ENCODE measurements at regions of chr14 and their contacts with region 1.

Region 1: GRCh38 chr14:49381778-49382177 is 204.4 kb downstream of the RPS29 start:
- DNase-seq: no peak
- H3K4me3 ChIP-seq: no peak overlapping the region
- H3K27ac ChIP-seq: no peak overlapping the region
- H3K4me1 ChIP-seq: no peaks in the 10 kb centered on the region
- H3K27me3 ChIP-seq: no peaks in the 10 kb centered on the region
- CTCF ChIP-seq: no peak

Region 2: DNA sequence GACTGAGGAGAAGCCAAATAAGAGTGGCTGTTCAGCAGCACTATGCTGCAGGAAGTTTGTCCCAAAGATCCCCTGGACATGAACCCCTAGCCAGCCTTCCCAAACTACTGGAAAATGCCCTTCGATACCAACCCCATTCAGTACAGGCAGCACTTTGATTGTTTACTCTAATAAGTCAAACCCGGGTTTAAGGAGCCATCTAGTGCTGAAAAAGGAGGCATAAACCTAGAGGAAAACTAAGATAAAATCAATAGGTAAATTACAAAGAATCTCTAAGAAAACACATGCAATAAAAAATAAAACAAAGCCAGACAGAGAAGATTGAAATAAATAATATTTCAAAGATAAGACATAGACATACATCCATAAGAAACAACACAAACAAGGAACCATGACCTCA is 567.2 kb before region 1 on chr14:
- CTCF ChIA-PET with region 1: no interaction called
- POLR2A ChIA-PET with region 1: no interaction called
- intact Hi-C with region 1: no loop called
- DNase-seq: peak; percentile 21
- H3K4me3 ChIP-seq: no peak overlapping the region
- H3K27ac ChIP-seq: no peak overlapping the region
- H3K4me1 ChIP-seq: no peaks in the 10 kb centered on the region
- H3K27me3 ChIP-seq: no peaks in the 10 kb centered on the region
- CTCF ChIP-seq: peak; percentile 41; the same call in 1 of the 2 replicates

Region 3: DNA sequence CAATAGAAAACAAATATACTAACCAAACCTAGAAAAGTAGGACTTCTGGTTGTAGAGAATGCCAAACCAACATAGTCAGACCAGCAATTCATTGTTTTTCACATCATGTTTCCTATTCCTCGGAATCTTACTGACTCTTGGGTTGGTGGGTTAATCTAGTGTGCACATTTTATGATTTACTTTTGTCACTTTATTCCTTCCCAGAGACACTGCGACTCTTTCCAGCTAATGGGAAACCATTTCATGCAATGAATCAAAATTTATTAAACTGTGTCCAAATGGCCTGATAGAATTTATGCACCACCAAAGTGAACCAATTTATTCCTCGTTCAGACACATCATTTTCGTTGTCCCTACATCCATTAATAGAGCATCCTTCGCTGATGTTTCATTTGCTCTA is 260.5 kb before region 1 on chr14:
- CTCF ChIA-PET with region 1: no interaction called
- POLR2A ChIA-PET with region 1: no interaction called
- intact Hi-C with region 1: no loop called
- DNase-seq: no peak
- H3K4me3 ChIP-seq: no peak overlapping the region
- H3K27ac ChIP-seq: no peak overlapping the region
- H3K4me1 ChIP-seq: no peaks in the 10 kb centered on the region
- H3K27me3 ChIP-seq: no peaks in the 10 kb centered on the region
- CTCF ChIP-seq: no peak

Region 4: GRCh38 chr14:49396801-49397200 is 15.0 kb after region 1 on chr14:
- CTCF ChIA-PET with region 1: no interaction called
- POLR2A ChIA-PET with region 1: no interaction called
- intact Hi-C with region 1: no loop called
- DNase-seq: no peak
- H3K4me3 ChIP-seq: no peak overlapping the region
- H3K27ac ChIP-seq: no peak overlapping the region
- H3K4me1 ChIP-seq: no peaks in the 10 kb centered on the region
- H3K27me3 ChIP-seq: no peaks in the 10 kb centered on the region
- CTCF ChIP-seq: no peak

Region 5: DNA sequence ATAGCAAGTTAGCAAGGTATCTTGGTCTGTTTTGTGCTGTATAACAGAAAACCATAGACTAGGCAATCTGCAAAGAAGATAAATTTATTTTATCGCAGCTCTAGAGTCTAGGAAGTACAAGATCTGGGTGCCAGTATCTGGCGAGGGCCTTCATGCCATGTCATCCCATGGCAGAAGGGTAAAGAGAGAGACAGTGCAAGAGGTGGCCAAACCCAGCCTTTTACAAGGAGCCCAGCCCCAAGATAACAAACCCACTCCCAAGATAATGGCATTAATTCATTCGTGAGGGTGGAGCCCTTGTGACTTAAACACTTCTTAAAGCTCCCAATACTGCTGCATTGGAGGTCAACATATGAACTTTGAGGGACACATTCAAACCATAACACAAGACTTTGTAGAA is 187.5 kb after region 1 on chr14:
- CTCF ChIA-PET with region 1: no interaction called
- POLR2A ChIA-PET with region 1: no interaction called
- intact Hi-C with region 1: no loop called
- DNase-seq: no peak
- H3K4me3 ChIP-seq: no peak overlapping the region
- H3K27ac ChIP-seq: no peak overlapping the region
- H3K4me1 ChIP-seq: no peaks in the 10 kb centered on the region
- H3K27me3 ChIP-seq: no peaks in the 10 kb centered on the region
- CTCF ChIP-seq: no peak

Region 6: DNA sequence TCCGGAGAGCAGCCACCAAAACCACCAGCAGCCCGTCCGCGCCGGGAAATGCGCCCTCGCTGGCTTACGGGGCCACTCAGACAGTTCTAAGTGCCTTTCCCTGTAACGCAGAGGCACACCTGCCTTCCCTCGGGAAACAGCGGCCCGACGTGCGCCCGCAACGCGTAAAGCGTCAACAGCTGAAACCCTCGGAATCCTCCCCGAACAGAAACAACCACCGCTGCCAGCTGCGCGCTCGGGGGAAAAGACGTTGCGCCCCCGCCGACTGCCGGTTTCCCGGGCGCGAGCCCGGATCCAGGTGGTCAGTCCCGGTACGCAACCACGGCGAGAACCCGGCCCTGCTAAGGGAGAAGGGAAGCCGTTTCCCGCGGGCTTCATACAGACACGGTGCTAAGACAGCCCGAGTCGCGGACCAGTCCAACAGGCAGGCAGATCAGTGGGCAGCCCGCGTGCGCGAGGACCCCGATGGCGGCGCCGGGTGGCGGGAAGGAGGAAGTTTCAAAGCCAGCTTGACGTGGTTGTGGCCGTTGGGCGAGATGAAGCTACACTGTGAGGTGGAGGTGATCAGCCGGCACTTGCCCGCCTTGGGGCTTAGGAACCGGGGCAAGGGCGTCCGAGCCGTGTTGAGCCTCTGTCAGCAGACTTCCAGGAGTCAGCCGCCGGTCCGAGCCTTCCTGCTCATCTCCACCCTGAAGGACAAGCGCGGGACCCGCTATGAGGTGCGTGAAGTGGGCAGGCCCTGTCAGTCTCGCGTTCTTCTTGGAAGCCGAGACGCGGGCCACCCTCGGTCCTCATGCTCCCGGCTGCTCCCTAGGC is 216.9 kb after region 1 on chr14 and contains the start of gene LRR1:
- CTCF ChIA-PET with region 1: no interaction called
- POLR2A ChIA-PET with region 1: interaction called, 12 read pairs
- intact Hi-C with region 1: no loop called
- DNase-seq: peak; percentile 86
- H3K4me3 ChIP-seq: peak within 1 kb of the TSS; percentile 95
- H3K27ac ChIP-seq: peak within 1 kb of the TSS; percentile 97
- H3K4me1 ChIP-seq: no peaks in the 10 kb centered on the region
- H3K27me3 ChIP-seq: no peaks in the 10 kb centered on the region
- CTCF ChIP-seq: 0 out of 2 replicates have a peak, but pooled peaks have one; percentile 9
- total RNA-seq, gene LRR1: 47.5 and 49.2 TPM in 2 replicates